ENCODE measurements at regions of chr7 and their contacts with region 1.

Region 1: GRCh38 chr7:142088022-142088714 is 23.4 kb upstream of the MGAM2 start:
- DNase-seq: no peak
- H3K4me3 Mint-ChIP-seq: no peak overlapping the region
- H3K27ac Mint-ChIP-seq: no peak overlapping the region
- H3K4me1 Mint-ChIP-seq: peaks cover 15% of the 10 kb centered on the region
- H3K27me3 Mint-ChIP-seq: no peaks in the 10 kb centered on the region
- CTCF ChIP-seq: no peak

Region 2: GRCh38 chr7:141133646-141134045 is 954.5 kb before region 1 on chr7:
- CTCF ChIA-PET with region 1: no interaction called
- intact Hi-C with region 1: no loop called
- DNase-seq: no peak
- H3K4me3 Mint-ChIP-seq: no peak overlapping the region
- H3K27ac Mint-ChIP-seq: no peak overlapping the region
- H3K4me1 Mint-ChIP-seq: no peaks in the 10 kb centered on the region
- H3K27me3 Mint-ChIP-seq: no peaks in the 10 kb centered on the region
- CTCF ChIP-seq: no peak

Region 3: DNA sequence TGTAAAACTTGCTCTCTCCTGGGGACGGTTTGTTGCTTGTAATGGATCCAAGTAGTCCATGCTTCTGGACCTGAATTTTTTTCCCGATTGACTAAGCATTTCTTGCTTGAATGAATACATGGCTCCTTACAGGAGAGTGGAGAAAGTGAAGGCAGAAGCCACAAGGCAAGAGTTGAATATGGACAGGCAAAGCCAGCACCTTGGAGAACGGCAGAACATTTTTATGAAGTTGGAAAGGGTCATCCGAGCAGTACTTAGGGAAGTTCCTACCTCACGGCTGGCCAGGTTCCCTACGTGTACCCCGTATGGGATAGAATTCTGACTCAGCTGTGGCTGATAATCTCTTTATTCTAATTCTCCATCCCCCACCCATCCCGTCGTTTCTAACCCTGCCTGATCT is 27.2 kb before region 1 on chr7:
- CTCF ChIA-PET with region 1: no interaction called
- intact Hi-C with region 1: loop called (anchors 1 kb)
- DNase-seq: no peak
- H3K4me3 Mint-ChIP-seq: no peak overlapping the region
- H3K27ac Mint-ChIP-seq: no peak overlapping the region
- H3K4me1 Mint-ChIP-seq: no peaks in the 10 kb centered on the region
- H3K27me3 Mint-ChIP-seq: peaks cover 15% of the 10 kb centered on the region
- CTCF ChIP-seq: no peak

Region 4: DNA sequence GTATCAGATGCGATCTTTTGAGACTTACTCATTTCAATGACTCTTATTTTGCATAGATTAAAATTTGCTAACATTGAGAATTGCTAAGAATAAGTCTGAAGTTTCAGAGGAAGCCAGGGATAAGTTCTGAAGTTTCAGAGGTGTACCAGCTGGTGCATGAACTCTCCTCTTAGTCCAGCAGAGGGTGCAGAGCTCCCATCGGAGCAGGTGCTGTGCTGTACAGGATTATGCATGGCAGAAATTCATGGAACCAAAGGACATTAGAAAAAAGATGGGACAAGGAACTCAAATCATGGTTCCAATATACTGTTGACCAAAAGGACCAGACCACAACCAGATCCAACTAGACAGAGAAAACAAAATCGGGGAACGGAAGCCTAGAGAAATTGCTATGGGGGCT is 65.2 kb after region 1 on chr7:
- CTCF ChIA-PET with region 1: no interaction called
- intact Hi-C with region 1: no loop called
- DNase-seq: peak; percentile 10
- H3K4me3 Mint-ChIP-seq: no peak overlapping the region
- H3K27ac Mint-ChIP-seq: no peak overlapping the region
- H3K4me1 Mint-ChIP-seq: peaks cover 20% of the 10 kb centered on the region
- H3K27me3 Mint-ChIP-seq: no peaks in the 10 kb centered on the region
- CTCF ChIP-seq: no peak